ENCODE measurements at regions of chr10 and their contacts with region 1.

Region 1: DNA sequence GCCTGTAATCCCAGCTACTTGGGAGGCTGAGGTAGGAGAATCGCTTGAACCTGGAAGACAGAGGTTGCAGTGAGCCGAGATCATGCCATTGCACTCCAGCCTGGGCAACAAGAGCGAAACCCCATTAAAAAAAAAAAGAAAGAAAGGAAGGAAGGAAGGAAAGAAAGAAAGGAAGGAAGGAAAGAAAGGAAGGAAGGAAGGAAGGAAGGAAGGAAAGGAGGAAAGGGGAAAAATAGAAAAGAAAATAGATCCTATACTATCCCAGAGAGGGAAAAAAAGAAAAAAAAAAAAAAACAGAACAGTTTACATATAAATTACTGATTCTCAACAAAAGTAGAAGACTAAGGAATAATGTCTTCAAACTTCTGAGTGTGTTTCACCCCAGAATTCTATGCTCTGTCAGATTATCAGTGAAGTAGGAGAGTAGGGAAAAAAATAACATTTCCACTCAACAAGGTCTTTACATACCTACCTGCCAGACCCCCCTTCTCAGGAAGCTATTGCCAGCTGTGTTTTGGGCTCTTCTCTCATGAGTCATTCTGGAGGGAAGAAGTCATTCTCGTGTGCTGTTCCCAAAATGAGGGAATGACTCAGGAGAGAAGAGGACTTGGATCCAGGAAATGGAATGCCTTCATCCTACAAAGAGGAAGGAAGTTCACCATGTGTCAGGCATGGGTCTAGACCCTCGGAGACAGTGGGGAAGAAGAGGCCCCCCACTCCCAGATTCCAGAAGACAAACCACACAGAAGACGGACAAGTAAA is 20.9 kb downstream of the RGS10 start:
- DNase-seq: no peak

Region 2: GRCh38 chr10:118321724-118322575 is 1199.7 kb before region 1 on chr10:
- intact Hi-C with region 1: loop called in 1 of 2 experiments (anchors 5 kb)
- DNase-seq: no peak